Heart right ventricle (tissue), 16 donors: ENCODE measurements at regions of chr13 and their contacts with region 1.

Region 1: GRCh38 chr13:47543811-47544210 is 457.3 kb downstream of the SUCLA2 start:
- DNase-seq: no peak
- ATAC-seq: no peak
- H3K4me3 ChIP-seq: no peak overlapping the region
- H3K27ac ChIP-seq: no peak overlapping the region
- H3K4me1 ChIP-seq: peaks cover 0 to 18% (median 0%) of the 10 kb centered on the region in 9 donors
- H3K27me3 ChIP-seq: no peaks in the 10 kb centered on the region
- CTCF ChIP-seq: no peak

Region 2: DNA sequence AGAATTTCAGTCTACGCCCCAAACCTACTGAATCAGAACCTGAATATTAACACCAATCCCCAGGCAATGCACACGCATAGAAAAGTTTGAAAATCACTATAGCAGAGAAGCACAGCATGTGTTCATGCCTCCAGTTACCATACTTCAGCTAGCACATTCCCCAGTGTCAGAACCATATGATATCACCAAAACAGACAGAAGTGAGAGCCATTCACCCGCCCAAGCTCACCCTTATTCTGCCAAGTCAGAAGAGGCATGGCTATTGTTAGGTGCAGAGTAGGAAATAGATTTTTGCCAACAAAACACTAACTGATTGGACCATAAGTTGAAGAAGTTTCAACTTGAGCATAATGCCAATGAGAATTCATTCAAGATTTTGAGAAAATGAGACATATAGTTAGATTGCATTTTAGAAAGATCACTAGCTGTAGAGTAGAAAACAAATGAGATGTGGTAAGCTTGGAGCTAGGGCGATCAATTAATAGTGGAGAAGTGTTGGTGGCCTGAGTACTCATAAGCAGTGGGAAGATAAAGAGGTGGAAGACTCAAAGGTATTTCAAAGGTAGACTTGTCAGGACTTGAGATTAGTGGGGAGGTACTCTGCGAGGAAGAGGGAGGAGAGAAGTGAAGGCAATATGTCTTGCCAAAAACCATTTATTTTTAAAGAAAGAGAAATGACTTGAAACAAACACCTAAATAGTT is 35.1 kb before region 1 on chr13:
- intact Hi-C with region 1: loop called in 1 of 10 experiments (anchors 5 kb)
- DNase-seq: peak in 1 of 2 donors; percentile 38
- ATAC-seq: peak; percentile 88 to 99 (median 94)
- H3K4me3 ChIP-seq: no peak overlapping the region
- H3K27ac ChIP-seq: peak overlapping the region in 7 of 10 donors; percentile 12 to 76 (median 54)
- H3K4me1 ChIP-seq: peaks cover 0 to 3% (median 0%) of the 10 kb centered on the region in 9 donors
- H3K27me3 ChIP-seq: no peaks in the 10 kb centered on the region
- CTCF ChIP-seq: no peak